ENCODE measurements at regions of chr10 and their contacts with region 1.

Region 1: GRCh38 chr10:70666960-70667798 is 5.1 kb upstream of the ADAMTS14 start:
- DNase-seq: peak; percentile 90 to 98 (median 94)
- ATAC-seq: peak; percentile 65
- H3K4me3 ChIP-seq: no peak overlapping the region
- H3K27ac ChIP-seq: peak overlapping the region; percentile 82
- H3K4me1 ChIP-seq: peaks cover 72 to 91% of the 10 kb centered on the region in 2 experiments
- H3K27me3 ChIP-seq: no peaks in the 10 kb centered on the region
- CTCF ChIP-seq: no peak
- EP300 ChIP-seq: peak; percentile 100
- POLR2A ChIP-seq: peak; percentile 76
- RAD21 ChIP-seq: peak in 1 of 2 experiments; percentile 26; a peak in 2 of 4 replicates

Region 2: GRCh38 chr10:68813559-68813958 is 1853.6 kb before region 1 on chr10:
- CTCF ChIA-PET with region 1: no interaction called
- POLR2A ChIA-PET with region 1: no interaction called
- in situ Hi-C with region 1: no loop called
- intact Hi-C with region 1: no loop called
- DNase-seq: no peak
- ATAC-seq: no peak
- H3K4me3 ChIP-seq: no peak overlapping the region
- H3K27ac ChIP-seq: no peak overlapping the region
- H3K4me1 ChIP-seq: peaks cover 11 to 17% of the 10 kb centered on the region in 2 experiments
- H3K27me3 ChIP-seq: no peaks in the 10 kb centered on the region
- CTCF ChIP-seq: no peak
- EP300 ChIP-seq: no peak
- POLR2A ChIP-seq: no peak
- RAD21 ChIP-seq: no peak

Region 3: DNA sequence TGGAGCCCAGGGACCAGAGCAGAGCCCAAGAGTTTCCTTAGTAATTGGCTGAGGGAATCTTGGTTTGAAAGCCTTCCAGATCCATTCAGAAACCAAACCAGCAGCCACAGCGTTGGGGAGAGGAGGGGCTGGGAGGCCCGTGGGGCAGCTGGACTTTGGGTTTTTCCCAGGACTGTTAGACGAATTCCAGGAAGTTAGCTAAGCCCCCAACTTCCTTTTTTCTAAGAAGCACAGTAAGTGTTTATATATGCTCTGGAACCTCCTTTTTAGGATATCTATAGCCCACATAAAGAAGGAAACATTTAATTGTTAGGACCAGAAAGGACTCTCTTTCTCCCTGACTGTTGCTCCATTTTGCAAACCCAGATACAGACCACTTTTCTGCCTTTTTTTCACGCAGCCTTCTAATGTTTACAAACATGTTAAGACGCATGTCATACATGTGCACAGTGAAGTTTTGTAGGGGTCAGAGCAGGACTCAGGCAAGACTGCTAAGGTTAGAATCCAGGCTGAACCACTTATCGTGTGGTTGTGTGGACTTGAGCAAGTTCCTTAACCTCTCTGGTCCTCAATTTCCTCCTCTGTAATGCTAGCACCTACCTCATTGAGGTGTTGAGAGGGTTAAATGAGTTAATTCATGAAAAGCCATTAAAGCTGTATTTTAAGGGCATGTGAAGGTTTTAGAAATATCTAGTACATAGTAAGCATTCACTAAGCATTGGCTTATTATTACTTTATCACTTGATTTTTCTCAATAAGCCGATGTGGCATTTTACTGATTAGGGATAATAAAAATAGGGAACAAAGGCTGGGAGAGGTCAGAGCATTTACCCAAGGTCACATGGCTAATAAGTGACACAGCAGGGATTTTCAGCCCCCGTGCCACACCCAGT is 75.6 kb after region 1 on chr10:
- CTCF ChIA-PET with region 1: no interaction called
- POLR2A ChIA-PET with region 1: interaction called, 3 read pairs
- in situ Hi-C with region 1: no loop called
- intact Hi-C with region 1: loop called (anchors 1 kb)
- DNase-seq: peak; percentile 62 to 89 (median 76)
- ATAC-seq: peak; percentile 59
- H3K4me3 ChIP-seq: peak overlapping the region; percentile 0; the same call in 1 of the 2 replicates
- H3K27ac ChIP-seq: peak overlapping the region; percentile 75
- H3K4me1 ChIP-seq: peaks cover 59 to 62% of the 10 kb centered on the region in 2 experiments
- H3K27me3 ChIP-seq: no peaks in the 10 kb centered on the region
- CTCF ChIP-seq: no peak
- EP300 ChIP-seq: peak; percentile 95
- POLR2A ChIP-seq: no peak
- RAD21 ChIP-seq: peak in 1 of 2 experiments; percentile 26; a peak in 1 of 4 replicates